Activated naive CD4-positive, alpha-beta T cell treated with anti-CD3 and anti-CD28 coated beads for 36 hours (primary cell): ENCODE measurements at regions of chr5 and their contacts with region 1.

Region 1: DNA sequence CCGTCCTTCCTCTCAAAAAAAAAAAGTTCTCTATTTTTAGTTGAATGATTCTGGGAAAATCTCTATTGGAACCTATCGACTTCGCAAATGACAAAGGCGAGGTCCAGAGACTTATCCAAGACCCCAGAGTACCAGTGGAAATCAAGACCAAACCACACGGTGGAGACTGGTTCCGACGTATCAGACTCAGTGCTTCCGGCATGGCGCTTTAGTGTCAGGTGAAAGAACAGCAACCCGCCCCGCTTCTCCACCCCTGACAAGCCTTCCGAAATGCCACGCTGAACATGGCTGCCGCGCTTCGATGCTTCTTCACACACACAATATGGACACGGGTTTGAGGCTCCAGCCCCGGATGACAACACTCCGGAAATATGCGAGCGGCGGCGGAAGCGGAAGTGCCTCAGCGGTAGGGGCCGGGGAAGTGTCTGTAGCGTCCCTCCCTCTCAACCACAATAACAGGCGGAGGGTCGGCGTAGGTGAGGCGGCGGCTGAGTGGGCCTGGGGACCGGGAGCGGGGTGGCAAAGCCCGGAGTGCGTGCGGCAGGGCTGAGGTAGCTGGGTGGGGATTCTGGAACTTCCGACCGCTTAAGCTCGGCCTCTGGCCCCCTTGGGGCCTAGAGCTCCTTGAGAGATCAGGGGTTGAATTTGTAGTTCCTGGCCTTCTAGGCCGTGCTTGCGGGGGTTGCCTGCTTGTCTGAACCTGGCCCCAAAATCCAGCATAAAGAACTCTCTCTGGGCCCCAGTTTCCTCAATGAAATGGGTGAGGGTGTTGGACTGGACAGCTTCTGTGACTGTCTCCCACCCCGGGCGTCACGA is at the start of gene FBXO38:
- DNase-seq: peak; percentile 99
- H3K4me3 Mint-ChIP-seq: peak within 1 kb of the TSS; percentile 89
- H3K27ac Mint-ChIP-seq: peak within 1 kb of the TSS; percentile 94
- H3K4me1 Mint-ChIP-seq: peaks cover 63% of the 10 kb centered on the region
- H3K27me3 Mint-ChIP-seq: no peaks in the 10 kb centered on the region
- total RNA-seq, gene FBXO38: 31.7 to 34.2 TPM

Region 2: DNA sequence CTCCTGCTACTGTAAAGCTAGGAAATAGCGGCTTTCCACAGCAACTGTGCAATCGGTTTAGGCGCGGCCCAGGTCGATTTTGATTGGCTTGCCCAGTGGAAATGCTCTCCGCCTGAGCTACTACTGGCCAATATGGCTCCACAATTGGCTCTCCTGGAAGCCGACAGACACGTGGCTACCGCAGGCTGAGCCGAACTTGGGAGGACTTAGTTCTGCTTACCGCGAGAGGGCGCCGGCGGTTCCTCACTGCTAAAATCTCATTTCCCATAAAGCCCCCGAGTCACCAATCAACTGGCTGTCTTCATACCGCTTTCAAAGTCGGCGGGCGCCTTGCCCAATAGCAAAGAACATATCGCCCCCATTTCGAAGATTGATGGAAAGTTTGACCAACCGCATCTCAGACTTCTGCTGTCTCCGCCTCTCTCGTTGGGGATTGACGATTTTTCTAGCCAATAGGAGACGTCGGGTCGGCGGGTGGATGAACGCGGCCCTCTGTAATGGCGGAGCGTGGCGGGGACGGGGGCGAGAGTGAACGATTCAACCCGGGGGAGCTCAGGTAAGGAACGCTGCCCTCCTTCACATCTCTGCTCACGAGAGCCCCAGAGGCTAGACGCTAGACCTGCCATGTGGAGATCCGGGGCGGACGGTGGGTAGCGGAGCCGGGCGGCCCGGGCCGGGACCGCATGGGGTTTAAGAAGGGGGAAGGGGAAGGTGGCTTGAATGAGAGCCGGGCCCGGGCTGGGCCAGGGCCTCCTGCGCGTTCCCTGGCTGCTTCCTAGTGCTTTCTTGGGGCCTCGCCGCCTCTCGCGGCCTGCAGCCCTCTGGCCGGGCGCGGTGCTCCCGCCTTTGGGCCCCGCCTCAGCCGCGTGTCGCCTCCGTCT is 1936.7 kb before region 1 on chr5 and contains the start of gene TCERG1:
- CTCF ChIA-PET with region 1: no interaction called
- intact Hi-C with region 1: loop called (anchors 5 kb)
- DNase-seq: peak; percentile 99
- H3K4me3 Mint-ChIP-seq: peak within 1 kb of the TSS; percentile 100
- H3K27ac Mint-ChIP-seq: peak within 1 kb of the TSS; percentile 99
- H3K4me1 Mint-ChIP-seq: peaks cover 37% of the 10 kb centered on the region
- H3K27me3 Mint-ChIP-seq: no peaks in the 10 kb centered on the region
- total RNA-seq, gene TCERG1: 123 to 131 TPM

Region 3: GRCh38 chr5:148437249-148437648 is 53.5 kb after region 1 on chr5:
- CTCF ChIA-PET with region 1: no interaction called
- intact Hi-C with region 1: loop called (anchors 2 kb)
- DNase-seq: no peak
- H3K4me3 Mint-ChIP-seq: peak overlapping the region; percentile 37
- H3K27ac Mint-ChIP-seq: peak overlapping the region; percentile 80
- H3K4me1 Mint-ChIP-seq: peaks cover 5% of the 10 kb centered on the region
- H3K27me3 Mint-ChIP-seq: no peaks in the 10 kb centered on the region

Region 4: GRCh38 chr5:148476302-148476701 is 92.5 kb after region 1 on chr5:
- CTCF ChIA-PET with region 1: no interaction called
- intact Hi-C with region 1: no loop called
- DNase-seq: no peak
- H3K4me3 Mint-ChIP-seq: no peak overlapping the region
- H3K27ac Mint-ChIP-seq: no peak overlapping the region
- H3K4me1 Mint-ChIP-seq: no peaks in the 10 kb centered on the region
- H3K27me3 Mint-ChIP-seq: peaks cover 10% of the 10 kb centered on the region

Region 5: GRCh38 chr5:148791334-148791667 is 407.5 kb after region 1 on chr5:
- CTCF ChIA-PET with region 1: no interaction called
- intact Hi-C with region 1: loop called (anchors 5 kb)
- DNase-seq: peak; percentile 60
- H3K4me3 Mint-ChIP-seq: no peak overlapping the region
- H3K27ac Mint-ChIP-seq: no peak overlapping the region
- H3K4me1 Mint-ChIP-seq: peaks cover 18% of the 10 kb centered on the region
- H3K27me3 Mint-ChIP-seq: peaks cover 34% of the 10 kb centered on the region

Region 6: DNA sequence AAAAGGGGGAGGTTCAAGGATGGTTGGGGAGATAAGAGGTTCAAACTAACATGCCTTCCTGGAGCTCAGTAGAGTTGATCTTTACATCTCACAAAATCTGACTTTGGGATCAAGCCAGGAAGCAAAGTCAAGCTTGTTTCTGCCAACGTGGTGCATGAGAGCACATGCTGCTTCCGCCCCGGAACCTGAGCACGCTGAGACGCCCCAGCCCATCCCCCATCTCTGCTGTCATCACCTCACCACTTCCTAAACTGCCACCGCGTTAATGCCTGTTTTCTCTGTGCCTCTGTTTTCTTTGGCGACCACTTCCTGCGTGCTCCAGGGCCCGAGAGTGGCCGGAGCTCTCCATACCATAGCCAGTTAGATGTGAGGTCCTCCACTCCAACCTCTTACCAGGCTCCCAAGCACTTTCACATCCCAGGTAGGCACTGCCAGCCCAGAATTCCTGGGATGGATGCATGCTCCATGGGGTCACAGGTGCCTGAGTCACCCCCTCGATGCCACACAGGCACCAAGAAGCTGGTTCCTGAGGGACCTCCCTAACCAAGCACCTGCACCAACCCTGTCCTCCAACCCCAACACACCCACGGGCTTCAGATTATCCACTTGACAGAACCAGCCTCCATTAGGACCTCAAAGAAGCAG is 856.7 kb after region 1 on chr5:
- CTCF ChIA-PET with region 1: no interaction called
- intact Hi-C with region 1: loop called (anchors 10 kb)
- DNase-seq: peak; percentile 95
- H3K4me3 Mint-ChIP-seq: peak overlapping the region; percentile 19
- H3K27ac Mint-ChIP-seq: peak overlapping the region; percentile 80
- H3K4me1 Mint-ChIP-seq: peaks cover 33% of the 10 kb centered on the region
- H3K27me3 Mint-ChIP-seq: no peaks in the 10 kb centered on the region

Region 7: DNA sequence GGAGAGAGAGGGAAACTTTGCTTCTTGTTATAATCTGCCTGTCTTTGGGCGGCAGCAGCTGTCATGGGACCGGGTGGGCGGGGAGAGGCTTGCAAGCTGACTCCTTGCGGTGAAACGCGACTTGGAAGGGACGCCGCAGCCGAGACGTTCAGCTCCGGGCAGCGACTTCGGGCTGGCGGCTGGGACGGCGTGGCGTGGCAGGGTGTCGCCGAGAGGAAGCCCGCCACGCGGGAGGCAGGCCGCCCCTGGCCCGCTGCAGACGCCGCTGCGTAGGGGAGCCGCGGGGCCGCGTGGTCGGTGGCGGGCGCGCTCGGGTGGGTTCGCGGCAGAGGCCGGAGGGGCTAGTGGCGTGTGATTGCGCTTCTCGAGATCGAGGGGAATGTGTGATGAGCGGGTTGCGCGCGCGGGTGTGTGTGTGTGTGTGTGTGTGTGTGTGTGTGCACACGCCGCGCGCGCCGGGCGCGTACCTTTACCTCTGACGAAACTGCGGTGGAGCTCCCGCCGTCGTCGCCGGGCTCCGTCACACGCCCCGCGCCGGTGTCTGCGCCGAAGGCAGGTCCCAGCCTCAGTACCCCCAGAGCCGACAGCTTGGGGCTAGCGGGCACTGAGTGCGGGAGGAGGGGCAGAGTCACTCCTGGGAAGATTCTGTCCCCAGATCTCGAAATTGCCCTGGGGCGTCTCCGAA is 1348.0 kb after region 1 on chr5:
- CTCF ChIA-PET with region 1: no interaction called
- intact Hi-C with region 1: loop called (anchors 10 kb)
- DNase-seq: peak; percentile 90
- H3K4me3 Mint-ChIP-seq: peak overlapping the region; percentile 81
- H3K27ac Mint-ChIP-seq: peak overlapping the region; percentile 56
- H3K4me1 Mint-ChIP-seq: peaks cover 4% of the 10 kb centered on the region
- H3K27me3 Mint-ChIP-seq: no peaks in the 10 kb centered on the region